Body of pancreas (tissue), 4 donors: ENCODE measurements at regions of chr14 and their contacts with region 1.

Region 1: DNA sequence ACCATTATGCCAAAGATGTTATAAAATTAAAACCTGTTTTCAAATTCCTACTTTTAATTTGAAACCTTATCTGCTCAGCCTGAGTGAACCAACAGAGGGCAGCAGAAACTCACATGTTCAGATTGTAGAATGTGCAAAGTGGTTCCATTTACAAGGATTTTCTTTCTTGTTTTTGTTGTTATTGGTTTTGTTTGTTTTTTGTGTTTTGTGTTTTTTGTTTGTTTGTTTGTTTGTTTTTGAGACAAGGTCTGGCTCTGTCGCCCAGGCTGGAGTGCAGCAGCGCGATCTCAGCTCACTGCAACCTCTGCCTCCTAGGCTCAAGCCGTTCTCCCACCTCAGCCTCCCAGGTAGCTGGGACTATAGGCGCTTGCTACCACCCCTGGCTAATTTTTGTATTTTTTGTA is 22.8 kb upstream of the GARIN2 start:
- DNase-seq: peak; percentile 19 to 61 (median 46)
- ATAC-seq: no peak
- H3K4me3 ChIP-seq: no peak overlapping the region
- H3K27ac ChIP-seq: no peak overlapping the region
- H3K4me1 ChIP-seq: no peaks in the 10 kb centered on the region
- H3K27me3 ChIP-seq: no peaks in the 10 kb centered on the region
- CTCF ChIP-seq: peak; percentile 37 to 86 (median 72)
- POLR2A ChIP-seq: no peak

Region 2: DNA sequence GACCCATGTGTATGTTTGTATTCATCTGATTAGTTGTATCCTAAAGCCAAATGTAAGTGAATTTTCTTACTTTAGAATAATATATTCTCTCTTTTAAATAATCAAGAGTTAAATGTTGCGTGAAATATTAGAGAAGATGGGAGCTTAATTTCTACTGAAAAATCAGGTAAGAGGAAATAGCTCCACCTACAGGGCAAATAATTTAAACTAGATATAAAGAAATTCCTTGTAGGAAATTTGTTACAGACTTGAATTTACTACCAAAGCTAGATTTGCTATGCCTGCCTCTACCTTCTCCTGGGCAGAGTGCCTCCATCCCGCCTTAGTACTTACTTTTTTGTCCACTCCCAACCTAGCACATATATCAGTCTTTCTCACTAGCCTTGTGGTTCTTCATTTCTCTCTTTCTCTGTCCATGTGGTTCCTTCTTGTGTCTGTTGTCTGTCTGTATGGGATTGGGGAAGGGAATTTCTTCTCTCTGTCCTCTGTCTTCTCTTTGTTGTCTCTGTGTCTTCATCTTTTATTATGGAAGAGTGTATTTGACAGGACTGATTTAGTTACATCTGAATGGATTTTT is 119.5 kb after region 1 on chr14:
- intact Hi-C with region 1: loop called (anchors 10 kb)
- DNase-seq: no peak
- ATAC-seq: no peak
- H3K4me3 ChIP-seq: no peak overlapping the region
- H3K27ac ChIP-seq: no peak overlapping the region
- H3K4me1 ChIP-seq: peaks cover 6% of the 10 kb centered on the region
- H3K27me3 ChIP-seq: no peaks in the 10 kb centered on the region
- CTCF ChIP-seq: peak; percentile 37 to 73 (median 58)
- POLR2A ChIP-seq: no peak